Activated CD8-positive, alpha-beta memory T cell treated with anti-CD3 and anti-CD28 coated beads, Interleukin-2, amount 10 ng/mL, durations not matched to agents 7 days and 5 days (primary cell): ENCODE measurements at regions of chr1 and their contacts with region 1.

Region 1: DNA sequence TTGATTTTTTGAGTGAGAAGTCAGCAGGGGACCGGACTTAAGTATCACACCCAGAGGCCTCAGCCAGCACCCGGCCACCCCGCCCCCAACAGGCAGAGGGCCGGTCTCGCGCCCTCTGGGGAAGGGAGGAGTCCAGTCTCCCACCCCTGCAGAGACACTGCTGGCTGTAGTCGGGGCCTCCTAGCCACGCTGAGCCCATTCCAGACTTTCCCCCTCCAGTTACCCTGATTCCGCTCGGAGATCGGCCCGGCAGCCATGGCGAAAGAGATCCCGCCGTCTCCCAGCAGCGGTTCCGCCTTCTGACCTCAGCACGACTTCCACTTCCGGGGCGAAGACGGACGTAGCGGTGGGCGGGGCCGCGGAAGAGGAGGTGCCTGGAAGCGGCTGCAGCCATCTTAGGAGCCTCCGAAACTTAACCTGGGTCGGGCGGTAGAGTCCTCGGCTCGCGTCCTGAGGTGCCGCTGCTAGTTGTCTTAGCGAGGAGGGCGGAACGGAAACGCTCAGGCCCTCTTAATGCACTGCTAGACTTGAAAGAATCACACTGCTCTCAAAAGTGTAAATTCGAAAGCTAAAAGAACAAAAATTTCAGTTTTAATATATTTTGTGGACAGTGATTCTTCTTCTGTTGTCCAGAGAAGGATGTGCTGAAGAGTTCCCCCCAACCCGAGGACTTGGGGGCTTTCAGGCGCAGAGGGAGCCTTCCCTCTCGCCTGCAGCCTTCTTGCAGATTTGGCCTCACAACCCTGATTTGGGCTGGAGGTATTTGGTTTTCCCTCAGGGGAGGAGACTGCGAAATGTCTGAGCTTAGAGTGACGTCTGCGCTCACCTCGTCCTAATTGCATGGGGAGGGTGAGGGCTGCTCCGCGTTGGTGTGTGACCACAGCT is at the start of gene SF3B4:
- DNase-seq: peak; percentile 98
- ATAC-seq: peak; percentile 98
- H3K4me3 Mint-ChIP-seq: peak within 1 kb of the TSS; percentile 100
- H3K27ac Mint-ChIP-seq: peak within 1 kb of the TSS; percentile 94
- H3K4me1 Mint-ChIP-seq: peaks cover 61% of the 10 kb centered on the region
- H3K27me3 Mint-ChIP-seq: no peaks in the 10 kb centered on the region
- total RNA-seq, gene SF3B4: 79.4 to 109 TPM

Region 2: DNA sequence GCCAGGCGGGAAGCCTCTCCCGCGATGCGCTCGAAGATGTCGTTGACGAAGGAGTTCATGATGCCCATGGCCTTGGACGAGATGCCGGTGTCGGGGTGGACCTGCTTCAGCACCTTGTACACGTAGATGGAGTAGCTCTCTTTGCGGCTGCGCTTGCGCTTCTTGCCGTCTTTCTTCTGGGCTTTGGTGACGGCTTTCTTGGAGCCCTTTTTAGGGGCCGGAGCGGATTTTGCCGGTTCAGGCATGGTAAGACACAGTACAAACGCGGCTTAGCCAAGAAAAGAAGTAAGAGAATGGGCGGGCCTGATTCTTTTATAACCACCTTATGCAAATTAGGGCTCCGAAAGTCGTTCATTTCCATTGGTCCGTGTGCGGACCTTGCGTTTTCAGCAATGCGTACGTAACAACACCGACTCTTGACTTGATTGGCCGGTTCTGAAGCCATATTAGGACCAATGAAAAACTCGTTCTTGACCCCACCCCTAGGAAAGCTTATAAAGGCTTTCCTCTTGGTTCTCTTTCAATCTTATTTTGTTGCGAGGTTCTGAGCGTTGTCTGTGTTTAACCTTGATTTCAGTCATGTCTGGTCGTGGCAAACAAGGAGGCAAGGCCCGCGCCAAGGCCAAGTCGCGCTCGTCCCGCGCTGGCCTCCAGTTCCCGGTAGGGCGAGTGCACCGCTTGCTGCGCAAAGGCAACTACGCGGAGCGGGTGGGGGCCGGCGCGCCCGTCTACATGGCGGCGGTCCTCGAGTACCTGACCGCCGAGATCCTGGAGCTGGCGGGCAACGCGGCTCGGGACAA is 41.1 kb before region 1 on chr1:
- CTCF ChIA-PET with region 1: interaction called, 10 read pairs
- DNase-seq: peak; percentile 94
- ATAC-seq: peak; percentile 60
- H3K4me3 Mint-ChIP-seq: no peak overlapping the region
- H3K27ac Mint-ChIP-seq: no peak overlapping the region
- H3K4me1 Mint-ChIP-seq: peaks cover 17% of the 10 kb centered on the region
- H3K27me3 Mint-ChIP-seq: peaks cover 2% of the 10 kb centered on the region

Region 3: GRCh38 chr1:149942207-149942606 is 14.5 kb after region 1 on chr1:
- CTCF ChIA-PET with region 1: no interaction called
- DNase-seq: no peak
- ATAC-seq: no peak
- H3K4me3 Mint-ChIP-seq: no peak overlapping the region
- H3K27ac Mint-ChIP-seq: no peak overlapping the region
- H3K4me1 Mint-ChIP-seq: peaks cover 33% of the 10 kb centered on the region
- H3K27me3 Mint-ChIP-seq: no peaks in the 10 kb centered on the region